HEK293T (cell line): ENCODE measurements at regions of chr15 and their contacts with region 1.

Region 1: DNA sequence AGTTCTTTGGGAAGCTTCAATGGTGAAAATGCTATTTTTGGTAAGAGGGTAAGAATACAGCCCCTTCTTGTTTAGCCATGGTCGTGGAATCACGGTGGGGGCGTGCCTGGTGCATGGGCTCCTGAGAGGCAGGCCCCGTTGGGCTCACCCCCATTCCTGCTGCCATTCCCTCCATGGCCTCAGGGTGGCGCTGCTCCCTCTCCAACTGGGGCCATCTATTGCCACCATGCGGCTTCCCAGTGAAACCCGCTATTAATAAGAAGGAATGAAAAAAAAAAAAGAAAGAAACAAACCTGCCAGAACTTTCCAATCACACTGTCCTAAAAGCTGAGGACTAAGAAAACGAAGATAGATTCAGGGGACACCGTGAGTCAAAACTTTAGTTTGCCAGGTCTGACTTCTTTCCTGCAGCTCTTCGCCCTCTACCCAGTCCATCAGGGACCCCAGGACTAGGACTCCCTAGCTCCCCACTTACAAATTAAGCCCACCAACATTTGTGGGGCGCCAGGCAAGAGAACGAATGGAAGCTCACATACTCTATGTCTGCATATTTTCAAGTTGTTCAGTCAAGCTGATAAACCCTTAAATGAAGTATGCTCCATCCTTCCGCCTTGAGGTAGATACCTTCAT is 30.6 kb upstream of the ABHD2 start:
- DNase-seq: peak; percentile 92

Region 2: DNA sequence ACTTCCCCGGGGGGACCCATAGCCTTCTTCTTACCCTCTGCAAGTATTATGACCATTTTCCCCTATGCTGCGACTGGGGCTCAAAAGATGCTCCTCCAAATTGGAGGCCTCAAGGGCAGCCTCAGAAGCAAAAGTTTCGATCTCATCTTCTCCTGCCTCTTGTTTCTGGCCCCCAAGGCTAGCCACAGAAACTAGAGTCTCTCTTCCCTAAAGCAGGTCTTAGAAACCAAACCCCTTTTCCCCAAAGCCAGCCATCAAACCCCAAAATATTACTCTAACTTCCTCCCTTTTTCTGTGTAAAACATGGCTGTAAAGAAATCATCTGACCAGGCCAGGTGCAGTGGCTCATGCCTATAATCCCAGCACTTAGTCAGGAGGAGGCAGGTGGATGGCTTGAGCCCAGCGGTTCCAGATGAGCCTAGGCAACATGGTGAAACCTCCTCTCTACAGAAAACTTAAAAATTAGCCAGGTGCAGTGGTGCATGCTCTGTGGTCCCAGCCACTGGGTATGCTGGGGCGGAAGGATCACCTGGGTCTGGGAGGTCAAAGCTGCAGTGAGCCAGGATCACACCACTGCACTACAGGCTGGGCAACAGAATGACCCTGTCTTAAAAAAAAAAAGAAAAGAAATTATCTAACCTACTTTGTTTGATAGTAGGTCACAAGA is 107.8 kb before region 1 on chr15:
- CTCF ChIA-PET with region 1: no interaction called
- POLR2A ChIA-PET with region 1: no interaction called
- DNase-seq: no peak

Region 3: GRCh38 chr15:89041507-89041906 is 16.1 kb before region 1 on chr15:
- CTCF ChIA-PET with region 1: no interaction called
- POLR2A ChIA-PET with region 1: no interaction called
- DNase-seq: no peak

Region 4: DNA sequence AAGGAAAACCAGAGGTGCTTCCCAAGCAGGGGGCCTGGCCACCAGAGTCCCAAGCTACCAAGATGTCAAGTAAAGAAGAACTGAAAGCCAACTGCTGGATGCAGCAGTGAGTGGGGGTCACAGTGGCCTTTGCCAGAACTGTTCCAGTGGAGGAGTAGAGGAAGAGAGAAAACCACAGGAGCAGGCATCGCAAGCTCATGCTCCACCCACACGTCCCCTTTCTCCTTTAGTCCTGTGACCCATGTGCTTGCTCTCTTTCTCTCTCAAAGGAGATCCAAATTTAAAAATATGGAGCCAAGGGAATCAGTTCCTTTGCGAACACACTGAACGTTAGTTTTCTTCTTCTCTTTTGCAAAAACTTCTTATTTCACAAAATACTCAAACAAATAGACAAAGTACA is 18.2 kb after region 1 on chr15:
- CTCF ChIA-PET with region 1: interaction called, 10 read pairs
- POLR2A ChIA-PET with region 1: no interaction called
- DNase-seq: no peak

Region 5: GRCh38 chr15:89112341-89112971 is 54.8 kb after region 1 on chr15:
- CTCF ChIA-PET with region 1: no interaction called
- POLR2A ChIA-PET with region 1: no interaction called
- DNase-seq: no peak

Region 6: DNA sequence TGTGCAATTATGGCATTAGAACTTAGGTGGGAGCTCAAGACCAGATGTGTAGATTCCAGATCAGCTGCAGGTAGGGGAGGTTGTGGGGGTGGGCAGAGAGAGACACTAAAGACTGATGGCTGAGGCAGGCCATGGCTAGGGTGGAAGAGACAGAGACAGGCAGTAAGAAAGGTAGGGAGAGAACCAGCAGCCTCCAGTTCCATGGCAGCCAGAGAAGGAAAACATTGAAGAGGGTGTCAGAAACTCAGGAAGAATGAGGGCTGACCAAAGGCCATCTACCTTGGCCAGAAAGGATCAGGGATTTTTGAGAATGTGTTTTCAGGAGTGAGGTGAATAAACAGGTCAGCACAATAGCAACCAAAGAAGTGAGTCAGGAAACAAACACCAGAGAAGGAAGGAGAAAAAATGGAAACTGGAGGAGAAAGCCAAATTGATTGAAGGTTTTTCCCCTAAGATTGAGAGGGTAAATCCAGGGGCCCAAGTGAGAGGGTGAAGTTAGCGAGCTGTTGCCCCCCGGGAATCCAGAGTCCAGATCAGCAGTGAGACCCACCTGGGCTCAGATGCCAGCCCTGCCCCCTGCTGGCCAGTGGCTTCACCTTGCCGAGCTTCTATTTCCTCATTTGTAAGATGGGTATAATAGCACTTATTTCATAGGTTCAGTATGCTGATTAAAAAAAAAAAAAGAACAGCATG is 71.7 kb after region 1 on chr15:
- CTCF ChIA-PET with region 1: interaction called, 27 read pairs
- POLR2A ChIA-PET with region 1: interaction called, 3 read pairs
- DNase-seq: peak; percentile 63

Region 7: GRCh38 chr15:89161666-89162065 is 104.0 kb after region 1 on chr15:
- CTCF ChIA-PET with region 1: no interaction called
- POLR2A ChIA-PET with region 1: no interaction called
- DNase-seq: no peak

Region 8: GRCh38 chr15:89177633-89178306 is 120.2 kb after region 1 on chr15:
- CTCF ChIA-PET with region 1: interaction called, 91 read pairs
- POLR2A ChIA-PET with region 1: no interaction called
- DNase-seq: peak; percentile 75